ENCODE measurements at regions of chr5 and their contacts with region 1.

Region 1: DNA sequence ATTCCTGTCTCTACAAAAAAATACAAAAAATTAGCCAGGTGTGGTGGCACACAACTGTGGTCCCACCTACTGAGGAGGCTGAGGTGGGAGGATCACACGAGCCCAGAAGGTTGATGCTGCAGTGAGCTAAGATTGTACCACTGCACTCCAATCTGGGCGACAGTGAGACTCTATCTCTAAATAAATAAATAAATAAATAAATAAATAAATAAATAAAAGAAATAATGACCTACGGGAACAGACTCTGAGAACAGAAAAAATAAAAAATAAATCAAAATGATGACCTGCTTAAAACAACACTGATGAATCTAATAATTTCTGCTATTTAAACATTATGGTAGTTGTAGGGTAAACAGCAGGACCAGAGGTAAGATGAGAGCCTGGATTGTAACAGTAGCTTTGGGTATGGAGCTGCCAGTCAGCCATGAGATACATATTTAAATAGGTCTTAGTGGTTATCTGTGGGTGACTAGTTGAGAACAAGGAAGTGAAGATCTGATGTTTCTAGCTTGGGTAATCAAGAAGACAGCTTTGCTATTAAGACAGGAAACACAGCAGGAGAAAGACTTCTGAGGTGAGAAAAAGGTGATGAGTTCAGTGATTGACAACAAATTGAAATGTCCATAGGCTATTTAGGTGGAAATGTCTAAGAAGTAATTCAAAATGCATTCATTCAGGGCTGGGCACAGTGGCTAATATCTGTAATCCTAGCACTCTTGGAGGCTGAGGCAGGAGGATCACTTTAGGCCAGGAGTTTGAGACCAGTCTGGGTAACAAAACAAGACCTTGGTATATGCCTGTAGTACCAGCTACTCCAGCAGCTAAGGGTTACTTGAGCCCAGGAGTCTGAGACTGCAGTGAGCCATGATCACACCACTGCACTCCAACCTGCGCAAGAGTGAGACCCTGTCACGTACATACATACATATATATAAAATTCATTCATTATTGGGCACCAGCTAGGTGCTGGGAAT is 11.0 kb downstream of the RNF145 start:
- DNase-seq: peak in 2 of 9 experiments; percentile 38 to 68
- ATAC-seq: peak; percentile 85
- H3K4me3 ChIP-seq: no peak overlapping the region
- H3K4me3 Mint-ChIP-seq: peak overlapping the region; percentile 30
- H3K27ac ChIP-seq: peak overlapping the region in 1 of 2 experiments; percentile 58
- H3K27ac Mint-ChIP-seq: peak overlapping the region; percentile 80
- H3K4me1 ChIP-seq: peaks cover 37% of the 10 kb centered on the region
- H3K4me1 Mint-ChIP-seq: peaks cover 79% of the 10 kb centered on the region
- H3K27me3 ChIP-seq: no peaks in the 10 kb centered on the region
- H3K27me3 Mint-ChIP-seq: no peaks in the 10 kb centered on the region
- CTCF ChIP-seq: no peak

Region 2: GRCh38 chr5:158246661-158247060 is 951.7 kb before region 1 on chr5:
- CTCF ChIA-PET with region 1: no interaction called
- POLR2A ChIA-PET with region 1: no interaction called
- intact Hi-C with region 1: no loop called
- DNase-seq: no peak
- ATAC-seq: no peak
- H3K4me3 ChIP-seq: no peak overlapping the region
- H3K4me3 Mint-ChIP-seq: no peak overlapping the region
- H3K27ac ChIP-seq: no peak overlapping the region
- H3K27ac Mint-ChIP-seq: no peak overlapping the region
- H3K4me1 ChIP-seq: no peaks in the 10 kb centered on the region
- H3K4me1 Mint-ChIP-seq: no peaks in the 10 kb centered on the region
- H3K27me3 ChIP-seq: no peaks in the 10 kb centered on the region
- H3K27me3 Mint-ChIP-seq: peaks cover 3% of the 10 kb centered on the region
- CTCF ChIP-seq: no peak

Region 3: DNA sequence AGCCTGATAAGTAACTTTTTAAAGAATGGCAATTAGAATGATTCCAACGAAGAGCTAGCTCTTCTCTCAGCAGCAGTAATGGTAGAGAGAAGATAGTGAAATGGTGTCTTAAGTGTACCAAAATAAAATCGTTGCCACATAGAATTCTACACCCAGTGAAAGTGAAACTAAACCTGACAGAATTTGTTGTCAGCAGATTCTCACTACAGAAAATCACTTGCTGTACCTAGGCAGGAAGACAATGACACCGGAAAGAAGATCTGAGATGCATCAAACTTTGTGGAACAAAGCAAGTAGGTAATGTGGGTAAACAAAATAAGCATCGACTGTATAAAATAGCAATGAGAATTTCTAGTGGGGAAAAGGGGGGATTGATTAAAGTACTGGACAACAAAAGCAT is 77.9 kb before region 1 on chr5:
- CTCF ChIA-PET with region 1: no interaction called
- POLR2A ChIA-PET with region 1: no interaction called
- intact Hi-C with region 1: no loop called
- DNase-seq: peak in 2 of 9 experiments; percentile 47 to 72
- ATAC-seq: peak; percentile 94
- H3K4me3 ChIP-seq: peak overlapping the region; percentile 31 to 37
- H3K4me3 Mint-ChIP-seq: peak overlapping the region; percentile 78
- H3K27ac ChIP-seq: peak overlapping the region; percentile 29 to 79
- H3K27ac Mint-ChIP-seq: peak overlapping the region; percentile 95
- H3K4me1 ChIP-seq: peaks cover 15% of the 10 kb centered on the region
- H3K4me1 Mint-ChIP-seq: peaks cover 22% of the 10 kb centered on the region
- H3K27me3 ChIP-seq: no peaks in the 10 kb centered on the region
- H3K27me3 Mint-ChIP-seq: no peaks in the 10 kb centered on the region
- CTCF ChIP-seq: no peak

Region 4: DNA sequence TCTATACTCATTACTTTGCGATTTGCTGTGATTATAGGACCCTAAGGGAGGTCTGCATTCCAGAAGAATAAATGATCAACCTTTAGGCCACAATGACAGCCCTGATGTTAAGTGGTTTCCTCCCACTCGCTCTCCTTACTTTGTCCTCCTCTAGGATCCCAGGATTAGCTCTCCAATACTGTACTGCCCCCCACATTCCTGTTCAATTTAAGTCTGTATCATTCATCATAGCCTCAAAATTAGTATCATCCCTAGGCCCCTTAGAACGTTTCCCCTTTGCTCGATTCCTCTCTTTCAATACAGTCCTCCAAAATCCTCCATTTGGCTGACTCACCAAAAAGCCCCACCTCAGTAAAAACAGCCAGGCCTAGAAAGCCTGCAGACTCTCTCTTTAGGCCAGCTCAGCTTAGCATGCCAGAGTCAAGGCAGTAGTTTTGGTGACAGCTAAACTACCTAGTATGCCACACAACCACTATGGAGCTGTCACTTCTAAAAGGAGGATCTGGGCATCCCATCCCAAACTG is 13.4 kb before region 1 on chr5:
- CTCF ChIA-PET with region 1: interaction called, 4 read pairs
- POLR2A ChIA-PET with region 1: interaction called, 5 read pairs
- intact Hi-C with region 1: loop called in 1 of 2 experiments (anchors 2 kb)
- DNase-seq: peak in 1 of 9 experiments; percentile 20
- ATAC-seq: no peak
- H3K4me3 ChIP-seq: no peak overlapping the region
- H3K4me3 Mint-ChIP-seq: no peak overlapping the region
- H3K27ac ChIP-seq: no peak overlapping the region
- H3K27ac Mint-ChIP-seq: peak overlapping the region; percentile 61
- H3K4me1 ChIP-seq: peaks cover 14% of the 10 kb centered on the region
- H3K4me1 Mint-ChIP-seq: peaks cover 56% of the 10 kb centered on the region
- H3K27me3 ChIP-seq: no peaks in the 10 kb centered on the region
- H3K27me3 Mint-ChIP-seq: no peaks in the 10 kb centered on the region
- CTCF ChIP-seq: no peak